H1 (cell line): ENCODE measurements at regions of chr19 and their contacts with region 1.

Region 1: DNA sequence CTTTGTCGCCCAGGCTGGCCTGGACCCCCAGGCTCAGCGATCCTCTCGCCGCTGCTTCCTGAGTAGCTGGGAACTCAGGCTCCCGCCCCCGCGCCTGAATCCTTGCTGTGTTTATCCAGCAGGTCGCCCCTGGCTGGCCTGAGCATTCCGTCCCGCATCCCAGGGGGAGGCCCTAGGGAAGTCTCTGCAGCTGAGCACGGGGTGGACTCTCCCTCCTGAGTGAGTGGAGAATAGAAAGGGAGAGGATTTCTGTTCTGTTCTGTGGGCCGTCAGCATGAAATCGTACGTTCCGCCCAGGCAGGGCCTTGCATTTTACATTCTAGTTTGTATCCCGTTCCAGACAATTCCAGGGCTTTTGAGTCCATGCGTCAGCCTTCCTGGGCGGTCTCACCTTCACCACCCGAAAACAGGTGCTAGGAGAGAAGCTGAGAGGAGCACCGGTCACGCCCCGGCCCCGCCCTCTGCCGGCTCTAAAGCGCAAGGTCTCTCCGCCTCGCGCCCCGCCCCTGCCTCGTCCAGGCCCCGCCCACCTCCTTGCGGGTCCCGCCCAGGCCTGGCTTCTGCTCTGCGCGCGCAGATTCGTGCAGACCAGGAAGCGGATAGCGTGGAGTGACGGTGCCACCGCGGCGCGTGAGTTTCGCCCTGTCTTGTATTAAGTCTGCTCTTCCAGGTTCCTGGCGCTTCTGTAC is at the start of gene ZNF761:
- DNase-seq: peak; percentile 87 to 100
- H3K4me3 ChIP-seq: peak within 1 kb of the TSS; percentile 81 to 88 (median 84)
- H3K27ac ChIP-seq: peak within 1 kb of the TSS; percentile 53; the same call in 1 of the 2 replicates
- H3K4me1 ChIP-seq: peaks cover 0 to 2% (median under 1%) of the 10 kb centered on the region in 4 experiments; a peak in 4 of 7 replicates
- H3K27me3 ChIP-seq: no peaks in the 10 kb centered on the region
- CTCF ChIP-seq: peak in 2 of 3 experiments; percentile 23; a peak in 2 of 4 replicates
- EP300 ChIP-seq: no peak
- POLR2A ChIP-seq: peak; percentile 41 to 63
- RAD21 ChIP-seq: peak in 1 of 2 experiments; percentile 16; a peak in 2 of 4 replicates
- total RNA-seq, gene ZNF761: 24.2 and 25.1 TPM in 2 replicates

Region 2: GRCh38 chr19:53409505-53410204 is 21.9 kb before region 1 on chr19:
- CTCF ChIA-PET with region 1: no interaction called
- POLR2A ChIA-PET with region 1: no interaction called
- DNase-seq: no peak
- H3K4me3 ChIP-seq: no peak overlapping the region
- H3K27ac ChIP-seq: no peak overlapping the region
- H3K4me1 ChIP-seq: no peaks in the 10 kb centered on the region
- H3K27me3 ChIP-seq: no peaks in the 10 kb centered on the region
- CTCF ChIP-seq: no peak
- EP300 ChIP-seq: no peak
- POLR2A ChIP-seq: no peak
- RAD21 ChIP-seq: no peak

Region 3: GRCh38 chr19:53463263-53463662 is 31.7 kb after region 1 on chr19:
- CTCF ChIA-PET with region 1: interaction called, 3 read pairs
- POLR2A ChIA-PET with region 1: interaction called, 11 read pairs
- DNase-seq: peak; percentile 80 to 91
- H3K4me3 ChIP-seq: peak overlapping the region in 3 of 4 experiments; percentile 23 to 56 (median 46); a peak in 6 of 8 replicates
- H3K27ac ChIP-seq: no peak overlapping the region
- H3K4me1 ChIP-seq: peaks cover 0 to 8% (median 5%) of the 10 kb centered on the region in 4 experiments; a peak in 4 of 7 replicates
- H3K27me3 ChIP-seq: no peaks in the 10 kb centered on the region; a peak in 1 of 7 replicates
- CTCF ChIP-seq: no peak
- EP300 ChIP-seq: no peak
- POLR2A ChIP-seq: no peak
- RAD21 ChIP-seq: no peak